Heart left ventricle (tissue), 16 donors: ENCODE measurements at regions of chr14 and their contacts with region 1.

Region 1: GRCh38 chr14:95233702-95234241 is 76.4 kb upstream of the DICER1 start:
- DNase-seq: peak; percentile 63 to 88 (median 72)
- ATAC-seq: peak; percentile 76 to 90 (median 86)
- H3K4me3 ChIP-seq: no peak overlapping the region
- H3K27ac ChIP-seq: peak overlapping the region in 7 of 12 donors; percentile 24 to 53 (median 47)
- H3K4me1 ChIP-seq: peaks cover 0 to 52% (median 13%) of the 10 kb centered on the region in 12 donors
- H3K27me3 ChIP-seq: peaks cover 0 to 22% (median 0%) of the 10 kb centered on the region in 9 donors
- CTCF ChIP-seq: no peak
- POLR2A ChIP-seq: no peak

Region 2: DNA sequence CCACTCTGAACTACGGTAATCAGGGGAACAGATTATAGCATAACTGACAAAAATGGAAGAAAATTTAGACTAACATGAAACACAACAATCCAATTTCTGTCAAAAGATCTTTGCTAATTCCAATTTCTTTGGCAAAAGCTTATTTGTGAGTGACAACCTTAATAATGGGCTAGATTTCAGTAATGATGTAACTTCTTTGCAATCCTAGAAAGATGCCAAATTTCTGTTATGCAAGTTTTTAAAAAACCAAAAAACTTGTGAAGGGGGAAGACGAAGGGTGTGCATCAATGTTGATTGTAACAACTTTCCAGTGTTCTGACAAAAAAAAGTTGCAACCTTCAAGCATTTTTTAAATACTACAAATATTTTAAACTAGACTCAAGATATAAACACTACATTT is 136.4 kb before region 1 on chr14:
- intact Hi-C with region 1: no loop called
- DNase-seq: no peak
- ATAC-seq: no peak
- H3K4me3 ChIP-seq: no peak overlapping the region
- H3K27ac ChIP-seq: no peak overlapping the region
- H3K4me1 ChIP-seq: peaks cover 0 to 59% (median 15%) of the 10 kb centered on the region in 12 donors
- H3K27me3 ChIP-seq: no peaks in the 10 kb centered on the region
- CTCF ChIP-seq: no peak
- POLR2A ChIP-seq: no peak

Region 3: DNA sequence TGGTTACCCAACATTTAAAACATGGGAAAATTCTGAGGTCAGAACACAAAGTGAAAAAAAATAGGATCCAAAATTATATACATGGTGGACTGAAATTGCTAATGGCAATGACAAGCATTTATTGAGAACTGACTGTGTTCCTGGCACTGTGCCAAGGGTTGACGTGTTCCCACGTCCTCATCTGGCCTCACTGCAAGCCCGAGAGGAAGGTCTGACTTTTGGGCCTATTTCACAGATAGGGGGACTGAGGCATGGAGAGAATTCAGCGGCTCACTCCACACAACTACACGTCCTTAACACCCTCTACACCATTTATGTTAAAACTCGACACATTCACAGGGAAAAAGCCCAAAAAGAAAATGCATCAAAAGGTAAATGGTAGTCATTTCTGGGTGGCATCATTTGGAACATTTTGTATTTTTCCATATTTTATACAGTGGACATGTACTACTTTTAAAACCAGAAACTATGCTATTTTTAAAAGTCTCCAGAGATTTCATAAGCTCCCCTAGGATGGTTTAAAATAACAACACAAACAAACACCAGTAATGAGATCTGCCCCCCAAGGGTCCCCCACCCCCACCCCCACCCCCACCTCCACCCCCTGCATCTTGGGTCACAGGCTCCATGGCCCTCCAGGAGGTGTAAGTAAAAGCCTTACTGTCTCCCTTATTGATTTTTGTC is 58.2 kb after region 1 on chr14:
- intact Hi-C with region 1: loop called in 1 of 10 experiments (anchors 5 kb)
- DNase-seq: peak; percentile 85 to 88 (median 86)
- ATAC-seq: peak; percentile 11 to 74 (median 55)
- H3K4me3 ChIP-seq: no peak overlapping the region
- H3K27ac ChIP-seq: peak overlapping the region in 11 of 12 donors; percentile 58 to 93 (median 70)
- H3K4me1 ChIP-seq: peaks cover 0 to 36% (median 18%) of the 10 kb centered on the region in 12 donors
- H3K27me3 ChIP-seq: no peaks in the 10 kb centered on the region
- CTCF ChIP-seq: no peak
- POLR2A ChIP-seq: no peak

Region 4: DNA sequence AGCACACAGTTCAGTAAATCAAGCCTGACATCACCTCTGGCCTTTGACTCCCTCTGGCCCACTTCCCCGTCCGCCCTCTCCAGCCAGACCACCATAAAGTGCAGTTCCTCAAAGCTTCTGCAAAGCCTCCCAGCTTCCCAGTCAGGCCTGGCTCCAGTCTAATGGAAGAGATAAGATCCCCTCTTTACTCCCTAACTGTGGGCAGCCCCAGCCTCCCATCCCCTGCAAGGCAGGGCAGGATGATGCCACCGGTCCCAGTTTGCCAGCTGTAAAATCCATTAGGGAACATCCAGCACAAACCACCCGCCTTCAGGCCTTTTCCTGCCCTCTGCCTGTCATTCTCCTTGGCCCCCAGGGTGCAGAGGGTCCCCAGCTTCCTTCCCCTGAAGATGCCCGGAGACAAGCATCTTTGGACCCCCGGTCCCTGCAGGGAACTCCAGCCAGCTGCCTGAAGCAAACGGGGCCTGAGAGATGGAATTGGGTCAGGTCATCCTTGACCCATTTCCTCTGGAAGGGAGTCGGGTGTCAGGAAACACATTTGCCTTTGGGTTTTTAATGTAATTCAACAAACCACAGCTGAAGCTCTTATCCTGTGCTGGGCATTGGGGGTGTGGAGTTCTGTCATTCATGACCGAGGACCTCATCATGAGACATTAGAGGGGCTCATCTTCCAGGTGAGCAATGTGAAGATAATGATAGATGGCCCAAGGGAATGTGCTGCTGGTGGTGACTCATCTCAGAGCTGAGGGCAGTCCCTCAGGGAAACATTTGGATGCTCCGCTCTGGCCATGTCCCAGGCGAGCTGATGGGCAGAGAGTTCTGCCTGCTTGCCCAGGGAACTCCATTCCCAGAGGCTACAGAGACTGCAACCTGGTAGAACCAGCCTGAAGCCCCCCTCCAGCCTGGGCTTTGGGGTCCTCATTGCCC is 179.8 kb after region 1 on chr14:
- intact Hi-C with region 1: loop called in 1 of 10 experiments (anchors 10 kb)
- DNase-seq: no peak
- ATAC-seq: no peak
- H3K4me3 ChIP-seq: no peak overlapping the region
- H3K27ac ChIP-seq: no peak overlapping the region
- H3K4me1 ChIP-seq: peaks cover 6 to 30% (median 16%) of the 10 kb centered on the region in 12 donors
- H3K27me3 ChIP-seq: no peaks in the 10 kb centered on the region
- CTCF ChIP-seq: no peak
- POLR2A ChIP-seq: no peak